CD8-positive, alpha-beta T cell (primary cell): ENCODE measurements at regions of chr4 and their contacts with region 1.

Region 1: DNA sequence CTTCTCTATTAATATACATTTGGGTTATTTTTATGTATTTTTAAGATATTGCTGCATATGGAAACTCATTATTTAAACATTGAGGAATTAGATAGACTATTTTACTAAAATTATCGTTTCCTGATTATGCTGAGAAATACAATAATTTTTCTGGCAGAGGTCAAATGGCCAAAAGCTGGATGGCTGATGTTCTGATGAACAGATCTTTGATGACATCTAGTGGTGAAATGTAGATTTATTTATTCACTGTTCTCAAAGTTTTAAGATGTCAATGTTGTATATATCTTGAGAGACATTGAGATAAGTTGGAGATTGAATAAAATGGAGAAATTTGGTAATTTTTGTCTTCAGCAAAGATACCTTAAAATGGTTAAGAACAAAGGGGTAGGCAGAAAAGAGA is 96.2 kb downstream of the UGT8 start:
- DNase-seq: peak in 2 of 9 experiments; percentile 23 to 41
- ATAC-seq: no peak
- H3K4me3 ChIP-seq: no peak overlapping the region
- H3K4me3 Mint-ChIP-seq: no peak overlapping the region
- H3K27ac ChIP-seq: no peak overlapping the region
- H3K27ac Mint-ChIP-seq: no peak overlapping the region
- H3K4me1 ChIP-seq: no peaks in the 10 kb centered on the region
- H3K4me1 Mint-ChIP-seq: no peaks in the 10 kb centered on the region
- H3K27me3 ChIP-seq: no peaks in the 10 kb centered on the region
- H3K27me3 Mint-ChIP-seq: peaks cover 8% of the 10 kb centered on the region
- CTCF ChIP-seq: peak; percentile 52

Region 2: GRCh38 chr4:112775801-112776200 is 1919.0 kb before region 1 on chr4:
- CTCF ChIA-PET with region 1: no interaction called
- POLR2A ChIA-PET with region 1: no interaction called
- intact Hi-C with region 1: loop called in 1 of 2 experiments (anchors 10 kb)
- DNase-seq: no peak
- ATAC-seq: no peak
- H3K4me3 ChIP-seq: no peak overlapping the region
- H3K4me3 Mint-ChIP-seq: no peak overlapping the region
- H3K27ac ChIP-seq: no peak overlapping the region
- H3K27ac Mint-ChIP-seq: no peak overlapping the region
- H3K4me1 ChIP-seq: no peaks in the 10 kb centered on the region
- H3K4me1 Mint-ChIP-seq: no peaks in the 10 kb centered on the region
- H3K27me3 ChIP-seq: no peaks in the 10 kb centered on the region
- H3K27me3 Mint-ChIP-seq: no peaks in the 10 kb centered on the region
- CTCF ChIP-seq: no peak

Region 3: GRCh38 chr4:113278324-113278934 is 1416.3 kb before region 1 on chr4:
- CTCF ChIA-PET with region 1: no interaction called
- POLR2A ChIA-PET with region 1: no interaction called
- intact Hi-C with region 1: loop called in 1 of 2 experiments (anchors 5 kb)
- DNase-seq: peak in 7 of 9 experiments; percentile 17 to 62 (median 44)
- ATAC-seq: peak; percentile 63
- H3K4me3 ChIP-seq: no peak overlapping the region
- H3K4me3 Mint-ChIP-seq: no peak overlapping the region
- H3K27ac ChIP-seq: no peak overlapping the region
- H3K27ac Mint-ChIP-seq: no peak overlapping the region
- H3K4me1 ChIP-seq: no peaks in the 10 kb centered on the region
- H3K4me1 Mint-ChIP-seq: no peaks in the 10 kb centered on the region
- H3K27me3 ChIP-seq: no peaks in the 10 kb centered on the region
- H3K27me3 Mint-ChIP-seq: peaks cover 11% of the 10 kb centered on the region
- CTCF ChIP-seq: peak; percentile 31

Region 4: GRCh38 chr4:114386637-114387233 is 308.0 kb before region 1 on chr4:
- CTCF ChIA-PET with region 1: no interaction called
- POLR2A ChIA-PET with region 1: no interaction called
- intact Hi-C with region 1: loop called in 1 of 2 experiments (anchors 5 kb)
- DNase-seq: peak in 2 of 9 experiments; percentile 16 to 38
- ATAC-seq: no peak
- H3K4me3 ChIP-seq: no peak overlapping the region
- H3K4me3 Mint-ChIP-seq: no peak overlapping the region
- H3K27ac ChIP-seq: no peak overlapping the region
- H3K27ac Mint-ChIP-seq: no peak overlapping the region
- H3K4me1 ChIP-seq: no peaks in the 10 kb centered on the region
- H3K4me1 Mint-ChIP-seq: no peaks in the 10 kb centered on the region
- H3K27me3 ChIP-seq: no peaks in the 10 kb centered on the region
- H3K27me3 Mint-ChIP-seq: peaks cover 8% of the 10 kb centered on the region
- CTCF ChIP-seq: peak; percentile 54

Region 5: GRCh38 chr4:114684462-114684861 is 10.3 kb before region 1 on chr4:
- CTCF ChIA-PET with region 1: no interaction called
- POLR2A ChIA-PET with region 1: no interaction called
- intact Hi-C with region 1: no loop called
- DNase-seq: no peak
- ATAC-seq: no peak
- H3K4me3 ChIP-seq: no peak overlapping the region
- H3K4me3 Mint-ChIP-seq: no peak overlapping the region
- H3K27ac ChIP-seq: no peak overlapping the region
- H3K27ac Mint-ChIP-seq: no peak overlapping the region
- H3K4me1 ChIP-seq: no peaks in the 10 kb centered on the region
- H3K4me1 Mint-ChIP-seq: no peaks in the 10 kb centered on the region
- H3K27me3 ChIP-seq: no peaks in the 10 kb centered on the region
- H3K27me3 Mint-ChIP-seq: peaks cover 5% of the 10 kb centered on the region
- CTCF ChIP-seq: no peak

Region 6: GRCh38 chr4:114857831-114858230 is 163.1 kb after region 1 on chr4:
- CTCF ChIA-PET with region 1: no interaction called
- POLR2A ChIA-PET with region 1: no interaction called
- intact Hi-C with region 1: no loop called
- DNase-seq: no peak
- ATAC-seq: no peak
- H3K4me3 ChIP-seq: no peak overlapping the region
- H3K4me3 Mint-ChIP-seq: no peak overlapping the region
- H3K27ac ChIP-seq: no peak overlapping the region
- H3K27ac Mint-ChIP-seq: no peak overlapping the region
- H3K4me1 ChIP-seq: no peaks in the 10 kb centered on the region
- H3K4me1 Mint-ChIP-seq: no peaks in the 10 kb centered on the region
- H3K27me3 ChIP-seq: no peaks in the 10 kb centered on the region
- H3K27me3 Mint-ChIP-seq: no peaks in the 10 kb centered on the region
- CTCF ChIP-seq: no peak